Prostate gland (tissue), 2 donors: ENCODE measurements at regions of chr7 and their contacts with region 1.

Region 1: GRCh38 chr7:20172736-20173334 is 44.3 kb downstream of the MACC1 start:
- DNase-seq: peak; percentile 38
- H3K4me3 ChIP-seq: no peak overlapping the region
- H3K27ac ChIP-seq: no peak overlapping the region
- H3K4me1 ChIP-seq: no peaks in the 10 kb centered on the region
- H3K27me3 ChIP-seq: no peaks in the 10 kb centered on the region
- CTCF ChIP-seq: peak in 3 of 4 experiments; percentile 35 to 52 (median 47)
- POLR2A ChIP-seq: no peak

Region 2: DNA sequence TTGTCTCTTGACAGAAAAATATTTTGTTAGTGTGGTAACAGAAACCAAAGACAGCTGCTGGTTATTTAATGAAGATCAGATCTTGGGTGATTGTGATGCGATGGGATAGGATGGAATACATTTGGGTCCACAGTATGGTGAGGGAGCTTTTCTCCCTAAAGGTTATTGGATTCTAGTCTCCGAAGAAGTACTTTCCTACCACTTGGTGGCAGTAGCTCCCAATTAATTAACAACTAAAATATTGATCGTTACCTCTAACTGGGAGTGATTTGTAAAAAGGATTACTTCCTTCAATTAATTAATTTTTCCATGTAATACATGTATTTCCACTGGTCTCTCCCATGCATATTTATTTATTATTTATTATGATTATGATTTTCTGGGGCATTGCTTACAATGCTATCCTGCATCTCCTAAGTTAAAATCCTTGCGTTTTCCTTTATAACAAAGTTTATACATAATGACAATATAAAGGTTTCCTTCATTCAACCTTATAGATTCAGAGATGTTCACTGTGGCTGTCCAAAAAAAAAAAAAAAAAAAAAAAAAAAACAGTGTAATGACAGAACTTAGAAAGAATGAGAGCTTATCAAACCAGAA is 425.0 kb before region 1 on chr7:
- intact Hi-C with region 1: loop called (anchors 2 kb)
- DNase-seq: no peak
- H3K4me3 ChIP-seq: no peak overlapping the region
- H3K27ac ChIP-seq: no peak overlapping the region
- H3K4me1 ChIP-seq: no peaks in the 10 kb centered on the region
- H3K27me3 ChIP-seq: no peaks in the 10 kb centered on the region
- CTCF ChIP-seq: peak in 3 of 4 experiments; percentile 27 to 56 (median 51)
- POLR2A ChIP-seq: no peak

Region 3: DNA sequence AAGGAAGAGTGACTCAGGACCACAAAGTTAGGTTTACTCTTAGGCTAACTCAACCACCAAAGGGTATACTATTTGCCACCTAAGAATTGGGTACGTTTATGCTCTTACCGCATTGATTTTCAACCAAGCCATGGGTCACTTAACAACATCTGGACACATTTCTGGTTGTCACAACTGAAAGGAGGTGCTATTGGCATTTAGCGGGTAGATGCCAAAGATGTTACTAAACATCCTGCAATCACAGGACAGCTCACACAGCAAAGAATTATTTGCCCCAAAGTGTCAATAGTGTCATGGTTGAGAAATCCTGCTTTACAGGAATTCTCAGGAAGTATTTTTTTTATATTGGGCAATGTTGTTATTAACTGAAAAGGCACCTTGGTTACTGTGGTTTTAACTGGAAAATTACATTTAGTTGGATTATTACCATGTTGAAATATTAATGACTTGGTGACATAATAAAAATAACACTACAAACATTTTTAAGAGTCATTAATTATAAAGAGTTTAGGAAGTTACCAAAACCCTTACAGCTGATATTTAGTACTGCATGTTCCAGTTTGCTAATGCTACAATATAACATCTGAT is 214.4 kb before region 1 on chr7:
- intact Hi-C with region 1: no loop called
- DNase-seq: no peak
- H3K4me3 ChIP-seq: no peak overlapping the region
- H3K27ac ChIP-seq: no peak overlapping the region
- H3K4me1 ChIP-seq: no peaks in the 10 kb centered on the region
- H3K27me3 ChIP-seq: no peaks in the 10 kb centered on the region
- CTCF ChIP-seq: no peak
- POLR2A ChIP-seq: no peak

Region 4: DNA sequence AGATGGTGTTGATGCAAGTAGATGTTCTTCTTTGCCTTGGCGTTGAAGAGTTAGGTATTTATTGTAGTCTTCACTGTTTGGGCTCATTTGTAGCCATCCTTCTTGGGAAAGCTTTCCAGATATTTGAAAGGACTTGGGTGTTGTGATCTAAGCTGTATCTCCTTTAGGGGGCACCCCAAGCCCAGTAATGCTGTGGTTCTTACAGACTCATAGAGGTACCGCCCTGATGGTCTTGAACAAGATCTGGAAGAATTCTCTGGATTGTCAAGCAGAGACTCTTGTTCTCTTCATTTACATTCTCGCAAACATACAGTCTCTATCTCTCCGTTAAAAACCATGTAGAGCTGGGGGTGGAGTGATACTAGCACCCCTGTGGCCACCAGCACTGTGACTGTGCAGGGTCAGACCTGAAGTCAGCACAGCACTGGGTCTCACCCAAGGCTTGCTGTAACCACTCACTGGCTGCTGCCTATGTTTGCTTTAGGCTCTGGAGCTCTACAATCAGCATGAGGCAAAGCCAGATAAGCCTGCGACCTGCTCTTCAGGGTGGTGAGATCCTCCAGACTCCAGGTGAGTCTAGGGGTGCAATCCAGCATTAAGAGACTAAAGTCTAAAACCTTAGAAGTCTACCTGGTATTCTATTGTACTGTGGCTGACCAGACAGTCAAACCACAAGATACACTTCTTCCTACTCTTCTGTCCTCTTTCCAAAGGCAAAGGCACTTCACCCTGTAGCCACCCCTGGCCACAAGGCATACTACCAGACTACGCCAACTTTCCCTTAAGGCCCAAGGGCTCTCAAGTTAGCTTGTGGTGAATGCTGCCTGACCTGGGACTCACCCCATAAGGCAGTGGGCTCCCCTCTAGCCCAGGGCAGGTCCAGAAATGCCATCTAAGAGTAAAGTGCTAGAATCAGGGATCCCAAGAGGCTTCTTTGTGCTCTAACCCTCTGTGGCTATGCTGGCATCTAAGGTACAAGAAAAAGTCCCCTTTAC is 189.7 kb before region 1 on chr7:
- intact Hi-C with region 1: loop called (anchors 10 kb)
- DNase-seq: peak; percentile 9
- H3K4me3 ChIP-seq: no peak overlapping the region
- H3K27ac ChIP-seq: no peak overlapping the region
- H3K4me1 ChIP-seq: no peaks in the 10 kb centered on the region
- H3K27me3 ChIP-seq: no peaks in the 10 kb centered on the region
- CTCF ChIP-seq: peak in 2 of 4 experiments; percentile 23 to 28
- POLR2A ChIP-seq: no peak